MCF 10A (cell line): ENCODE measurements at regions of chr2 and their contacts with region 1.

Region 1: GRCh38 chr2:207487650-207488311 is 42.0 kb upstream of the CREB1 start:
- DNase-seq: peak; percentile 75
- H3K4me3 Mint-ChIP-seq: peak overlapping the region; percentile 46
- H3K27ac Mint-ChIP-seq: peak overlapping the region; percentile 59
- H3K4me1 Mint-ChIP-seq: peaks cover 7% of the 10 kb centered on the region
- H3K27me3 Mint-ChIP-seq: no peaks in the 10 kb centered on the region
- CTCF ChIP-seq: peak; percentile 35

Region 2: DNA sequence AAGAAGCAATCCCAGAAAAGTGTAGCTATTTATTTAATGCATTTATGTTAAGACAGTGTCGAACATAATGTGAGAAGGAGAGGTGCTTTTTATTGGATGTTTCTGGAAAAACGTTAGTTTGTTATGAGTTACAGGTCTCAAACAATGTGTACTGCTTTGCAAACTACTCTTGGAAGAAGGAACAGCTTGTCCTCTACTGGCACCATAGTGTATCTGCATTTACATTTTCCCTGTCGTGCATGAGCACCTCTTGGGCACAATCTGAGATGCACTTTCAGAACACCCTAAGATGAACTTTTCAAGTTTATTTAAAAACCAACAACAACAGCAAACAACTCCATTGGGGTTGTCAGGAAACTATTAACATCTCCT is 246.5 kb after region 1 on chr2:
- CTCF ChIA-PET with region 1: interaction called, 3 read pairs
- POLR2A ChIA-PET with region 1: no interaction called
- intact Hi-C with region 1: loop called (anchors 5 kb)
- DNase-seq: peak; percentile 43
- H3K4me3 Mint-ChIP-seq: no peak overlapping the region
- H3K27ac Mint-ChIP-seq: no peak overlapping the region
- H3K4me1 Mint-ChIP-seq: peaks cover 5% of the 10 kb centered on the region
- H3K27me3 Mint-ChIP-seq: no peaks in the 10 kb centered on the region
- CTCF ChIP-seq: peak; percentile 26

Region 3: DNA sequence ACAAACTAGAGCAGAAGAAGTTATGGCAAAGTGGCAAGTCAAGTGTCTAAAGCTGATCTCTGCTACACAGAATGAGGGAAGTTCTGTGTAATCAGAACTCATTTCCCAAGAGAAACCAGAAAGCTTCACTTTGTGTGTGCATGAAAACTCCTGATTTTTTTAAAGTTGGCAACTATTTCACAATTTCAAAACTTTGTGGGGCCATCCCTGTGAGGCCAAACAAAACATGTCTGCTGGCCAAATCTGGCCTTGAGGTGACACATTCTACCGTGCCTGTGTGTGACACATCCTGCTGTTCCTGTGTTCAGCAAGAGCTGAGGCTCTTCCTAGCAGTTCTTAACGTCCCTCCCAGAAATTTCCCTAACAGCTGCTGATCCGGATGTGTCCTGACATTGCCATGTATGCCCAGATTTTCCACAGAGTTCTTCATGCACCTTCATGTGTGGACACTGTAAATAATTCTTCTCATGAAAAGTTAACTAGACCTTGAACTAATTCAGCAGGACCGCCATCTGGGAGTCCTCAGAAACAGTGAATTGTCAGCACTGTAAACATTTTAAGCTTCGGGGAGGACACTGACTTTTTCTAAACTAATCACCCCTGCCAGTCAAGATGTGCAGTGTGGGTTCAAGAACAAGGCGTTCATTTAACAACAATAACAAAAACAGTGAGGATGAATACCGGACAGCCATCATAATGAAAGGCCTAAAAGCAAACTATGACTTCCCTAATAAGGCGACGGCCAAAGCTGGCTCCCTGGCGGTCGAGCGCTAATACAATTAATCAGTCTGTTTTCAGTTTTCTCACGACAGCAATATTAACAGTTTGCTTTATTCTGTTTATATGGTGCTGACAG is 438.6 kb after region 1 on chr2:
- CTCF ChIA-PET with region 1: no interaction called
- POLR2A ChIA-PET with region 1: no interaction called
- intact Hi-C with region 1: no loop called
- DNase-seq: peak; percentile 84
- H3K4me3 Mint-ChIP-seq: peak overlapping the region; percentile 8
- H3K27ac Mint-ChIP-seq: peak overlapping the region; percentile 80
- H3K4me1 Mint-ChIP-seq: peaks cover 14% of the 10 kb centered on the region
- H3K27me3 Mint-ChIP-seq: no peaks in the 10 kb centered on the region
- CTCF ChIP-seq: no peak